Activated CD8-positive, alpha-beta T cell treated with anti-CD3 and anti-CD28 coated beads, Interleukin-2, amount 10 ng/mL, durations not matched to agents 7 days and 5 days (primary cell): ENCODE measurements at regions of chr18 and their contacts with region 1.

Region 1: DNA sequence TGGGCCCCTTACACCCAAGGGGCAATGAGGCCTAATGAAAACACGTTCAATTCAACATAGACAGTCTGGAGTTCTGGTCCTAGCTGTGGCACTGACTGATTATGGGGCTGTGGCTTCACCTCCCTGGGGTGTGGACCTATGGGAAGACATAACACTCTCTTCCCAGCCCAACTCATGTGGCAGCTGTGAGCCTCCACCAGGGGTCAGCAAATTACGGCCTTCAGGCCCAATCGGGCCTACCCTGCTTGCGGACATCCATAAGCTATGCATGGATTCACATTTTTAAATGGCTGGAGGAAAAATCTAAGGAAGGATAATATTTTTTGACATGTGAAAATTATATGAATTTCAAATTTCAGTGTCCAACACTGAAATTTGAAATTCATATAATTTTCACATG is 101.3 kb downstream of the LOXHD1 start:
- DNase-seq: peak; percentile 22
- ATAC-seq: no peak
- H3K4me3 Mint-ChIP-seq: no peak overlapping the region
- H3K27ac Mint-ChIP-seq: no peak overlapping the region
- H3K4me1 Mint-ChIP-seq: no peaks in the 10 kb centered on the region
- H3K27me3 Mint-ChIP-seq: peaks cover 5% of the 10 kb centered on the region

Region 2: GRCh38 chr18:46622999-46623398 is 67.3 kb after region 1 on chr18:
- CTCF ChIA-PET with region 1: interaction called, 12 read pairs
- POLR2A ChIA-PET with region 1: no interaction called
- DNase-seq: no peak
- ATAC-seq: peak; percentile 43
- H3K4me3 Mint-ChIP-seq: no peak overlapping the region
- H3K27ac Mint-ChIP-seq: peak overlapping the region; percentile 88
- H3K4me1 Mint-ChIP-seq: peaks cover 46% of the 10 kb centered on the region
- H3K27me3 Mint-ChIP-seq: peaks cover 2% of the 10 kb centered on the region